HCT116 (cell line): ENCODE measurements at regions of chr3 and their contacts with region 1.

Region 1: GRCh38 chr3:47989981-47990440 is 26.2 kb downstream of the MAP4 start:
- DNase-seq: peak; percentile 69
- ATAC-seq: peak; percentile 97
- H3K4me3 ChIP-seq: no peak overlapping the region
- H3K27ac ChIP-seq: no peak overlapping the region
- H3K4me1 ChIP-seq: peaks cover 9 to 16% of the 10 kb centered on the region in 2 experiments; a peak in 3 of 4 replicates
- H3K27me3 ChIP-seq: no peaks in the 10 kb centered on the region
- CTCF ChIP-seq: peak; percentile 76 to 94 (median 85); a peak in 5 of 6 replicates
- POLR2A ChIP-seq: no peak
- RAD21 ChIP-seq: peak; percentile 95

Region 2: DNA sequence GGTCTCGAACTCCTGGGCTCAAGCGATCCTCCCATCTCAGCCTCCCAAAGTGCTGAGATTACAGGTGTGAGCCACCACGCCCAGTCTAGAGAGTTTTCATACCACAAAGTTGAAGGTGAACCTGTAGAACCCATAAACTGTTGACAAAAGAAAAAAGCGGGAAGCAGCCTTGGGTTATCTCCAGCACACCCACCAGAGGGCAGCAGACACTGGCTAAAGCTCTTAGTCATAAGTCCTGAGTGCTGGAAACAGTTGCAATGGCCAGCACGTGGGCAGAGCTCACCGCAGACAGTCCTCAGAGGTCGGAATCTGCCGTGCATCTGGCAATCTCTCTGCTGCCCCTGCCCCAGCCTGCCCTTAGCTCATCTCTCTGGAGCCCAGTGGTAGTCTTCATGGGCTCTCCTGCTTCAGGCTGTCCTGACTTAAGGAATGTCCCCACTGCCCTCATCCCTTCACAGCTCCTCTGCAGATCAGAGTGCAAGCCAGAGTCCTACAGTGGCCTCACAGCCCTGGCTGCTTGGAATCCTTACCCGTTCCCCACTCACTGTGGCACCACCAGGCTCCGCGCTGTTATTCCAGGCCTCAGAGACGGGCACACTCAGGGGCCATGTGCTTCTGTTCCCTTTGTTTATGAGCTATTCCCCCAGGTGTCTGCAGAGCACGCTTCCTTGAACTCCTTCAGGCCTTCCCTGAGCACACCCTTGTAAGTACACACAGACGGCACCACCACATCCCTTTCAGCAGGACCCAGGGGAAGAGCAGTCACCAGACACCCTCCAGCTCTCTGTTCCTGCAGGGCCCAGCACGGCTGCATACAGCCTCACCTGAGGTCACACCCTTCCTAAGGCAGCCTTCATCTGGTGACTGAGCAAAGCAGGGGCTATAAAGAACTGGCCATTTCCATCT is 467.7 kb before region 1 on chr3:
- CTCF ChIA-PET with region 1: interaction called, 5 read pairs
- POLR2A ChIA-PET with region 1: no interaction called
- RAD21 ChIA-PET with region 1: no interaction called
- intact Hi-C with region 1: loop called (anchors 5 kb)
- DNase-seq: peak; percentile 91
- ATAC-seq: peak; percentile 92
- H3K4me3 ChIP-seq: no peak overlapping the region
- H3K27ac ChIP-seq: no peak overlapping the region
- H3K4me1 ChIP-seq: peaks cover 12 to 18% of the 10 kb centered on the region in 2 experiments
- H3K27me3 ChIP-seq: no peaks in the 10 kb centered on the region
- CTCF ChIP-seq: peak; percentile 79 to 96 (median 84)
- POLR2A ChIP-seq: no peak
- RAD21 ChIP-seq: peak; percentile 100

Region 3: DNA sequence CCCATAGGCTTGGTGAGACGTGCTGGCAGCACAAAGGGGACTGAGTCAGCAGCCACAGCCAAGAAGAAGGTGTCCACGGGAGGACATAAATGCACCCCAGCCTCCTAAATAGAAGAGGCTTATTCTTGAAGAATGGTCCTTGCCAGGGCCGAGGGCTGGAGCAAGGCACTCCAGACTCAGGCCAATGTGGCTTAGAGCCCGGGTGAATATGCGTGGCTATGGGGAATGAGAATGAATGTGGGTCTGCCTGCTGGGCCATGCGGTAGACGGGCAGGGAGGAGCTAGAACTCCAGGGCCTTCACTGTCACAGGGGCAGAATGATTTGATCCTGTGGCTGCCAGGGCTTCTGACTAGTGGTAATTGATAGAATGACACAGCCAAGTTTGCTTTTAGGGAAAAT is 153.0 kb before region 1 on chr3:
- CTCF ChIA-PET with region 1: interaction called, 19 read pairs
- POLR2A ChIA-PET with region 1: no interaction called
- RAD21 ChIA-PET with region 1: no interaction called
- intact Hi-C with region 1: loop called (anchors 1 kb)
- DNase-seq: no peak
- ATAC-seq: peak; percentile 16; the same call in 1 of the 2 replicates
- H3K4me3 ChIP-seq: no peak overlapping the region
- H3K27ac ChIP-seq: no peak overlapping the region
- H3K4me1 ChIP-seq: no peaks in the 10 kb centered on the region
- H3K27me3 ChIP-seq: no peaks in the 10 kb centered on the region
- CTCF ChIP-seq: no peak
- POLR2A ChIP-seq: no peak
- RAD21 ChIP-seq: no peak

Region 4: GRCh38 chr3:47849699-47850563 is 140.1 kb before region 1 on chr3:
- CTCF ChIA-PET with region 1: interaction called, 4 read pairs
- POLR2A ChIA-PET with region 1: no interaction called
- RAD21 ChIA-PET with region 1: no interaction called
- intact Hi-C with region 1: loop called (anchors 5 kb)
- DNase-seq: no peak
- ATAC-seq: peak; percentile 73
- H3K4me3 ChIP-seq: no peak overlapping the region
- H3K27ac ChIP-seq: 0 out of 2 replicates have a peak overlapping the region, but pooled peaks have one; percentile 18
- H3K4me1 ChIP-seq: no peaks in the 10 kb centered on the region
- H3K27me3 ChIP-seq: no peaks in the 10 kb centered on the region
- CTCF ChIP-seq: peak in 2 of 3 experiments; percentile 41 to 53; a peak in 4 of 6 replicates
- POLR2A ChIP-seq: no peak
- RAD21 ChIP-seq: peak; percentile 21; the same call in 1 of the 2 replicates